Mammary epithelial cell (primary cell): ENCODE measurements at regions of chr1 and their contacts with region 1.

Region 1: GRCh38 chr1:220281159-220281574 is 8.9 kb upstream of the RAB3GAP2 start:
- DNase-seq: peak; percentile 32
- H3K4me3 ChIP-seq: no peak overlapping the region
- H3K27ac ChIP-seq: no peak overlapping the region
- H3K4me1 ChIP-seq: no peaks in the 10 kb centered on the region
- H3K27me3 ChIP-seq: no peaks in the 10 kb centered on the region
- CTCF ChIP-seq: peak; percentile 62 to 63

Region 2: DNA sequence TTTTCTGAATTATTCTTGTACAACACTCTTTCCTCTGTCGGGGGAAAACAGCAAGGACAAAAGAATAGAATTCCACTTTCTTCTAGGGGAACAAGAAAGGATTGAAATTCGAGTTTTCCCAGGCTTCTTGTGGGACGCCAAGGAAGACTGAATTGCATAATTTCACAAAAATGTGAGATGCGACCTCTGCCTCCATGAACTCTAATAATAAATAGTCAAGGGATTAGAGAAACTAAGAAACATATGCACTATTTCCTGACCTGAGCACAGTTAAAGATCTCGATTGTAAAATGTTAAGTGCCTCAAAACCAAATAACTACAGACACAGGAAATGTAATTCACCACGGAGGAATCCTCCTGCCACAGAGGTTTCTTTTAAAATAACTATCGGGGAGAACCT is 129.4 kb after region 1 on chr1:
- CTCF ChIA-PET with region 1: no interaction called
- dilution Hi-C with region 1: no loop called
- in situ Hi-C with region 1: no loop called
- intact Hi-C with region 1: no loop called
- DNase-seq: peak; percentile 30
- H3K4me3 ChIP-seq: no peak overlapping the region
- H3K27ac ChIP-seq: no peak overlapping the region
- H3K4me1 ChIP-seq: no peaks in the 10 kb centered on the region
- H3K27me3 ChIP-seq: no peaks in the 10 kb centered on the region
- CTCF ChIP-seq: no peak

Region 3: GRCh38 chr1:220680085-220680687 is 399.0 kb after region 1 on chr1:
- CTCF ChIA-PET with region 1: no interaction called
- dilution Hi-C with region 1: no loop called
- in situ Hi-C with region 1: no loop called
- intact Hi-C with region 1: loop called (anchors 2 kb)
- DNase-seq: peak; percentile 32
- H3K4me3 ChIP-seq: no peak overlapping the region
- H3K27ac ChIP-seq: no peak overlapping the region
- H3K4me1 ChIP-seq: no peaks in the 10 kb centered on the region
- H3K27me3 ChIP-seq: no peaks in the 10 kb centered on the region
- CTCF ChIP-seq: peak; percentile 57 to 83